ENCODE measurements at regions of chr19 and their contacts with region 1.

Region 1: DNA sequence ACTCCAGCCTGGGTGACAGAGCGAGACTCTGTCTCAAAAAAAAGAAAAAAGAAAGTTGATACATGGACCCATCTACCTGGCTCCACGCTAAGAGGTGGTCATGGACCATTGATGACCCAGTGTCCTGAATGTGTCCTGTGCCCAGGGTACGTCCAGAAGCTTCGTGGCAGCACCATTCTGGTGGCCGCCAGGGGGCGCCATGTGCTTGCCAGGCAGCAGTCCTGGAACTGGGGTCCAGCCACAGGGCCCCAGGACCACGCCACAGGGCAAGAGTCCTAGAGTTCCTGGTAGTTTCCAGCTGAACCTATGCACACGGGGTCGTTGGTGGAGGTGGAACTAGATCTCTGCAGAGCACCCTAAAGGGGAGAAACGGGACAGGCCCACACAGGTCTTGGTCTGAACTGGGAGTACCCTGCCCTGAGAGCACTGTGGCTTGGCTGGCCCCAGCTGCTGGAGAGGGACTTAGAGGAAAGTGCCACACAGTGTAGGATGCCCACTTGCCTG is 19.9 kb upstream of the FBXO27 start:
- H3K4me3 ChIP-seq: no peak overlapping the region
- H3K27ac ChIP-seq: no peak overlapping the region
- H3K4me1 ChIP-seq: no peaks in the 10 kb centered on the region
- CTCF ChIP-seq: peak; percentile 98

Region 2: GRCh38 chr19:38784224-38784623 is 268.1 kb before region 1 on chr19:
- CTCF ChIA-PET with region 1: no interaction called
- POLR2A ChIA-PET with region 1: no interaction called
- H3K4me3 ChIP-seq: no peak overlapping the region
- H3K27ac ChIP-seq: no peak overlapping the region
- H3K4me1 ChIP-seq: 0 out of 2 replicates have a peak, but pooled peaks cover 2% of the 10 kb centered on the region
- CTCF ChIP-seq: no peak

Region 3: GRCh38 chr19:38959618-38960017 is 92.7 kb before region 1 on chr19:
- CTCF ChIA-PET with region 1: interaction called, 40 read pairs
- POLR2A ChIA-PET with region 1: no interaction called
- H3K4me3 ChIP-seq: no peak overlapping the region
- H3K27ac ChIP-seq: no peak overlapping the region
- H3K4me1 ChIP-seq: peaks cover 3% of the 10 kb centered on the region; the same call in 1 of the 2 replicates
- CTCF ChIP-seq: no peak

Region 4: GRCh38 chr19:39014037-39014436 is 38.3 kb before region 1 on chr19:
- CTCF ChIA-PET with region 1: interaction called, 10 read pairs
- POLR2A ChIA-PET with region 1: no interaction called
- H3K4me3 ChIP-seq: no peak overlapping the region
- H3K27ac ChIP-seq: no peak overlapping the region
- H3K4me1 ChIP-seq: no peaks in the 10 kb centered on the region
- CTCF ChIP-seq: no peak

Region 5: DNA sequence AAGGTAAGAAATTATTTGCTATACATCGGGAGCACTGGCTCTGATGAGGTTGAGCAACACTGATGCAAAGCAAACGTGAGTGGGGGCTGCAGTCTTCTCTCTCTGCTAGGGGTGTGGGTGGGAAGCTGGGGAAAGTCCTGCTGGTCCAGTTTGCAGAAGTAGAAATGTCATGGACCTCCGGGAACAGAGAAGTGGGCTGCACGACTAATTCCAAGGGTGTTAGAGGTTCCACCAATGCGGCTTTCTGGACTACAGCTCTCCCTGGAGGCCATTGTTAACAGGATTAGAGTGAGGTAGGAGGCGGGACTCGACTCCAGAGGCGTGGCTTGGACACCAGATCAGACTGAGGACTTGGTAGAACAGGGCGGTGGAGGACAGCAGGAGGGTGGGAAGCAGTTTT is 14.2 kb before region 1 on chr19:
- CTCF ChIA-PET with region 1: interaction called, 44 read pairs
- POLR2A ChIA-PET with region 1: no interaction called
- H3K4me3 ChIP-seq: no peak overlapping the region
- H3K27ac ChIP-seq: no peak overlapping the region
- H3K4me1 ChIP-seq: peaks cover 14% of the 10 kb centered on the region
- CTCF ChIP-seq: peak; percentile 74; the same call in 1 of the 2 replicates

Region 6: DNA sequence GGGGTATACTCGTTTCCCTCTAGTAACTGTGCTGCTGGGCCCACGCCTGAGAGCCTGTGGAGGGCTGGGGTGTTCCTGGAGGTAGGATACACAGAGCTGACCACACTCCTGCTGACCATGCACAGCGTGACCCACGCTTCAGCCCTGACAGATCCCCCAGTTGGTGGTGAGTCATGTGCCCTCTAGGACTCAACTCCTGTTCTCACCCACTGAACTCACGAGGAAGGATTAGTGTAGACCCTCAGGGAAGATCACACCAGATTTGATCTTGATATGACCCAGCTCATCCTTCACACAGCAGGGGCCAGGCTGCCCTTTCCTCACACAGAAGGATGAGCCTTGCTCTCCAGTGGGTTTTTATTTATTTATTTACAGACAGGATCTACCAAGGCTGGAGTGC is 18.6 kb after region 1 on chr19:
- CTCF ChIA-PET with region 1: interaction called, 36 read pairs
- POLR2A ChIA-PET with region 1: no interaction called
- H3K4me3 ChIP-seq: no peak overlapping the region
- H3K27ac ChIP-seq: no peak overlapping the region
- H3K4me1 ChIP-seq: no peaks in the 10 kb centered on the region
- CTCF ChIP-seq: no peak

Region 7: DNA sequence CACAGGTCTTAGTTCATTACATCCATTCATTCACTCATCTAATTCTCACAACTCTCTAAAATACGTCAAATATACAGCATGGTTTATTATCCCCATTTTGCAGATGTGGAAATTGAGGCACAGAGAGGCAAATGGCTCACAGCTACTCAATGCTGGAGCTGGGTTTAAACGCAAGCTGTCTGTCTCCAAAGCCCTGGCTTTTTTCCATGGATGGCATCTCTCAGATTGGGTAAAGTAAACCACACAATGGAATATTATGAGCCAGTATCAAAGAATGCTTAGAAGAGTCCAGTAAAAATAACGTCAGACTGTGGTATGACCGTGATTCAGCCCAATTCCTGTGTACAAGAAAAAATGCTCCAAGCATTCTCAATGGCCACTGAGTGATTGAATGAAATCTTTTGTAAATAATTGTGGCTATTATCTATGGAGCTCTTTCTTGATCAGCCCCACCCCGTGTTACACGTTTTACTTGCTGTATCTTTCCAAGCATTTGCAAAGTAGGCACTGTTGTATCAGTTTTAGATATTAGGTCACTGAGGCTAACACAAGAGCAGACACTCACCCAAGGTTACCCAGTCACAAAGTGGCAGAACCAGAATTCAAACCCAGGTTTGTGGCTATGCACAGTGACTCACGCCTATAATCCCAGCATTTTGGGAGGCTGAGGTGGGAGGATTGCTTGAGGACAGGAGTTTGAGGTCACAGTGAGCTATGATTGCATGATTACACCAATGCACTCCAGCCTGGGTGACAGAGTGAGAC is 26.3 kb after region 1 on chr19:
- CTCF ChIA-PET with region 1: interaction called, 36 read pairs
- POLR2A ChIA-PET with region 1: no interaction called
- H3K4me3 ChIP-seq: no peak overlapping the region
- H3K27ac ChIP-seq: no peak overlapping the region
- H3K4me1 ChIP-seq: peaks cover 5% of the 10 kb centered on the region; the same call in 1 of the 2 replicates
- CTCF ChIP-seq: no peak

Region 8: DNA sequence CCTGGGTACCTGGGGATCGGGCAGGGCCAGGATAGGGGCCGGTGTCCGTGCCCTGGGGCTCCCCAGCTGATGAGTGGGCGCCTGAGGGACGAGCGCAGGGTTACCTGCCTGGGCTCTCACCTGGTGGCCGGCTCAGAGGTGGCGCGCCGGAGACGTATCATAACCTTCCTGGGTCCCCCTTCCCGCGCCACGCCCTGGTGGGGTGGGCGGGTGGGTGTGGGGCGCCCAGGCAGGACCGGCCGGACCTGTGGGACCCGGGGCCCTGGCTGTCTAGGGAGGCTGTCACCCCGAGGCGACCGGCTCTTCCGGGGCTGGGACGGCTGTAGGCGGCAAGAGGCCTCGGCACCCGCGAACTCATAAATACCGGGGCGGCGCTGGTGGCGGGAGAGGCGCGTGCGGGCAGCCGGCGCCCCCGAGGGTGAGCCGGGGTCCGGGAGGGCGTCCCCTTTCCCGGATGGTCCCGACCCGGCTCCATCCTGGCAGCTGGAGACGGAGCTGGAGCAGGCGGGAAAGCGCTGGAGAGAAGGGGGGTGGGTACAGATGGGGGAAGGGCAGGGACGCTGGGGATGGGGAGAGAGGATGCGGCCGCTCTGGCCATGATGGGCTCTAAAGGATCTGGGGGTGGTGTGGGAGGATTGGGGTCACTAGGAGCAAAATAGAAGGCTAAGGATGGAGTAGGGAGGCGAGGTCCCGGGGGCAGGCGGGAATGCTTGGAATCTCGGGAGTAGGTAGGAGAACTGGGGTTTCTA is 31.9 kb after region 1 on chr19 and contains the start of gene ACP7:
- CTCF ChIA-PET with region 1: interaction called, 18 read pairs
- POLR2A ChIA-PET with region 1: no interaction called
- H3K4me3 ChIP-seq: no peak within 1 kb of the TSS
- H3K27ac ChIP-seq: no peak within 1 kb of the TSS
- H3K4me1 ChIP-seq: peaks cover 5% of the 10 kb centered on the region; the same call in 1 of the 2 replicates
- CTCF ChIP-seq: no peak

Region 9: GRCh38 chr19:39144245-39145071 is 92.2 kb after region 1 on chr19:
- CTCF ChIA-PET with region 1: no interaction called
- POLR2A ChIA-PET with region 1: no interaction called
- H3K4me3 ChIP-seq: no peak overlapping the region
- H3K27ac ChIP-seq: peak overlapping the region; percentile 24; the same call in 1 of the 2 replicates
- H3K4me1 ChIP-seq: peaks cover 17% of the 10 kb centered on the region
- CTCF ChIP-seq: no peak

Measured in HEK293 (cell line).